PC-3 (cell line): ENCODE measurements at regions of chr22 and their contacts with region 1.

Region 1: DNA sequence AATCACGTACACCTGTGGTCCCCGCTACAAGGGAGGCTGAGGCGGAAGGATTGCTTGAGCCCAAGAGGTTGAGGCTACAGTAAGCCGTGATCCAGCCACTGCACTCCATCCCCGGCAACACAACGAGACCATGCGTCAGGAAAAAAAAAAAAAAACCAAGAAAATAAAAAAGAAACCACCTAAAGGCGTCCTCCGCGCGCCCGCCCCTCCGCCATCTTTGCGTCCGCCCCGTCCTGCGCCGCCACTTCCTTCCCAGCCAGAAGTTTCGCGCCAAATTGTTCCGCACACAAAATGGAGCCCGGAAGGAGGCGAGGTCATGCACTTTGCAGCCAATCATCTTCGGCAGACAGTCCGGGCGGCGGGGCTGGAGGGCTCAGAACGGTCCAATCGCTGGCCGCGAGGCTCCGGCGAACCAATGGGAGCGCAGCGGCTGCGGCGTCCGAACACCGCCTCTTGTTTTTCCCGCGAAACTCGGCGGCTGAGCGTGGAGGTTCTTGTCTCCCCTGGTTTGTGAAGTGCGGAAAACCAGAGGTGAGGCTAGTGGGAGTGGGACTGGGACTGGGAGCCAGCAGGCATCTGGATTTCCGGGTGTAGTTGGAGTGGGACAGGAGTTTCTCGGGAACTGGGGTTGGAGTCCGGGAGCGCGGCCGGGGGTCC is at the start of gene MCM5:
- DNase-seq: peak; percentile 95
- ATAC-seq: peak; percentile 100
- H3K4me3 ChIP-seq: peak within 1 kb of the TSS; percentile 94
- H3K27ac ChIP-seq: peak within 1 kb of the TSS; percentile 61
- H3K4me1 ChIP-seq: peaks cover 18% of the 10 kb centered on the region
- H3K27me3 ChIP-seq: no peaks in the 10 kb centered on the region
- CTCF ChIP-seq: no peak
- total RNA-seq, gene MCM5: 112 and 131 TPM in 2 replicates

Region 2: GRCh38 chr22:35380547-35381423 is 19.0 kb before region 1 on chr22 and contains the start of gene HMOX1:
- CTCF ChIA-PET with region 1: no interaction called
- POLR2A ChIA-PET with region 1: no interaction called
- intact Hi-C with region 1: loop called (anchors 1 kb)
- DNase-seq: peak; percentile 71
- ATAC-seq: peak; percentile 80
- H3K4me3 ChIP-seq: peak within 1 kb of the TSS; percentile 83
- H3K27ac ChIP-seq: 0 out of 2 replicates have a peak within 1 kb of the TSS, but pooled peaks have one; percentile 21
- H3K4me1 ChIP-seq: peaks cover 29% of the 10 kb centered on the region
- H3K27me3 ChIP-seq: no peaks in the 10 kb centered on the region
- CTCF ChIP-seq: 0 out of 2 replicates have a peak, but pooled peaks have one; percentile 10
- total RNA-seq, gene HMOX1: 14.5 and 16.5 TPM in 2 replicates